Posterior cingulate gyrus (tissue), 11 donors: ENCODE measurements at regions of chr1 and their contacts with region 1.

Region 1: GRCh38 chr1:154463512-154463990 is 38.5 kb upstream of the TDRD10 start:
- DNase-seq: no peak

Region 2: DNA sequence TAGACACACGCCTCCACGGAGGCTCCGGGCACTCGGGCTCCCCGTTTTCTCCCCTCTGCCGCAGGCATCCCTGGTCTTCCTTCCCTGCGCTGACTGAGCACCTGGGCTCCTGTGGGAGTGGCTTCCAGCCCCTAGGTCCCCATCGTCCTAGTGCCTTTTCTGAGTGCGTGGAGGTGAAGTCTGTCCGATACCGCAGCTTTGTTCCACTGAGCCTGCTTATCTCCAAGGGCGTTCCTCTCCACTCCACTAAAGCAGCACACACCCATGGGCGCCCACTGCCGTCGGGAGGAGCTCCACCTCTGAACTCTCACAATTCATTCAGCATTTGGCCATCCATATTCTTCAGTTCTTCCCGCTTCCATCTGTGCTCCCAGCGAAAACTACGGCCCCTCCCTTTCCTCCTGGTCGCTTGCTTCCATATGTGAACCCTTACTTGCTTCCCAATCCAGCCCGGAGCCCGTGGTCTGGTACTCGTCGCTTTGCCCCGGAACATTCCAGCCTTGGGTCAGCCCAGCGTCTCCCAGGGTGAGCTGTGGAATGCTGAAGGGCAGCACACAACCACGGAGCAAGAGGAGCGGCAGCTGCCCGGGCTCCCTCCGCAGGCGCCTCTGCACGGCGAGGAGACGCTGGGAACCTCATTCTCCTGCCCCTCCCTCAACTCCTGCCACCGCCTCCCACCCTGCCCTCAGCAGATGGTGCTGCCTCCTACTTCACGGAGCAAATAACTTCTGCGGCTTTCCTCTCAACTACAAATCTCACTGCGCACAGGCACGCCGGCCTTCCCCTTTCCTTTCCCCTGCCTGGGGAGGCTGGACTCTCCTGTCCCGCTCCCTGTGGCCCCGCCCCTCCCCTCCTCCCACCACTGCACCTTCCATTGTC is 110.7 kb before region 1 on chr1:
- intact Hi-C with region 1: loop called (anchors 5 kb)
- DNase-seq: peak; percentile 27 to 92 (median 49)

Region 3: GRCh38 chr1:154404984-154405761 is 58.4 kb before region 1 on chr1 and contains the start of gene IL6R:
- intact Hi-C with region 1: loop called (anchors 10 kb)
- DNase-seq: peak; percentile 55 to 96 (median 79)